B cell (primary cell): ENCODE measurements at regions of chr2 and their contacts with region 1.

Region 1: DNA sequence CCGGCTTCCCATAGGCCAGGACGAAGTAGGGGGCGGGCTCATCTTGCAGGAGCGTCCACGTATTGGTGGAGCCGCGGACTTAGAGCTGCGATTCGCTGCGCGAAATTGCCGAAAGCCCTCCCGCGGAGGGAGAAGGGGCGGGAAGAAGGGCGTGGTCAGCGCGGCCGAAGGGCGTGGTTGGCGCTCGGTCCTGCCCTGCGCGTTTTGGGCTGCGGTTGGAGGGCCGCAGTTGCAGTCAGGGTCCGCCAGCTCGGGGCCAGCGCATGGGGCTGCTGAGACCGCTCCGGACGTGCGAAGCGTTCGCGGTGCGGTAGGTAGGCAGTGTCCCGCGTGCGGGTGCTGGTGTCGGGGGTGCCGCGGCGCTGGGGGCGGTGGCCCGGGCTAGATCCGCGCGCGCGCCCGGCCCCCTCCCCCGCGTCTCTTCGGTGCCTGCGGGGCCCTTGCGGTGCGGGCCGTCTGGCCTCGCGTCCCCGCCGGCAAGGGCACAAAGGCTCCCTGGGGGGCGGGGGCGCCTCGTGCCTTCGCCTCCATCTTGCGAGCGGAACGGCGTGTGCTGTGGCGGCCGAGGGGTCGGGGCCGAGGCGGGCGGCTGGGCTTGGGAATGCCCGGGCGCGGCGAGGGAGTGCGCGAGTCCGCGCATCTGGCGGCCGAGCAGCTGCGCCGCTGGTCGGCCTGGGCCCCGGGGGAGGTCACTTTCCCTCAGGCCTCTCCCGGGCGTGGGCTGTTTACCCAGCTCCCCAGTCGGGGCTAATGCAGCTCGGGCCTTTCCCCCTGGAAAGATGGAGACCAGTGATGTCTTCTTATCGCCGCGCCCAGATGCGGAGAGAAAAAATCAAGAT is at the start of gene CEP68:
- DNase-seq: peak; percentile 98
- ATAC-seq: peak; percentile 92
- H3K4me3 ChIP-seq: peak within 1 kb of the TSS; percentile 76 to 81 (median 80)
- H3K4me3 Mint-ChIP-seq: peak within 1 kb of the TSS; percentile 100
- H3K27ac ChIP-seq: peak within 1 kb of the TSS; percentile 78 to 88
- H3K27ac Mint-ChIP-seq: peak within 1 kb of the TSS; percentile 99
- H3K4me1 ChIP-seq: peaks cover 47 to 48% of the 10 kb centered on the region in 2 donors
- H3K4me1 Mint-ChIP-seq: peaks cover 65% of the 10 kb centered on the region
- H3K27me3 ChIP-seq: no peaks in the 10 kb centered on the region
- H3K27me3 Mint-ChIP-seq: no peaks in the 10 kb centered on the region
- CTCF ChIP-seq: no peak
- total RNA-seq, gene CEP68: 31.8 and 32.0 TPM in 2 replicates

Region 2: DNA sequence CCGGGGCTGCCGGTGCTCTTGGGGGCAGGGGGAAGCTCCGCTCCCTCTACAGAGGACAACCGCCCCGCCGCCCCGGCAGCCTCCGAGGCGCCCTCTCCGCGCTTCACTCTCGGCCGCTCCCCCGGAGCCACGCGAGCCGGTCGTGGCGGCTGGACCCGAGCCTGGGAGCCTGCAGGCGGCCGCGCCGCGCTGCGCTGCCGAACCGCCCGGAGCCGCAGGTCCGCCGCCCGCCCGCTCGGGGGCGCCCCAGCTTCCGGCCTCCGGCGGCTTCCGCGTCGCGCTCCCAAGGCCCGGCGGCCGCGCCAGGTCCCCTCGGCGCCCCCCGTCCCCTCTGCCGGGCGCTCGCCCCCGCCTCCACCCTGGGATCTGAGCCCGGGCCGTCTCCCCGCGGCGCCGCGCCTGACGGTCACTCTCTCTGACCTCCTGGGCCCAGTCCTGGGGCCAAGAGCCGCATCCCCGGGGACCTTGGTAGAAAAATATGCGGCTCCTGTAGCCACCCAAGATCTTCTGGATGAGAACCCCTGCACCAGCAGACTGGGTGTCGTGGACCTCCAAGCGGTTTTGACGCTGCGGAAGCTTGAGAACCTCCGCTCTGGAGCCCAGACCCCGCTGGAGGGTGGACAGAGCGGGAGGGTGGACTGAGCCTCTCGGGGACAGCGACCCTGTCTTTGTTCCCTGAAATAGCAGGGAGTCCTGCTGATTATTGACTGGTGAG is 447.1 kb before region 1 on chr2:
- CTCF ChIA-PET with region 1: no interaction called
- POLR2A ChIA-PET with region 1: no interaction called
- intact Hi-C with region 1: loop called (anchors 1 kb)
- DNase-seq: peak; percentile 86
- ATAC-seq: peak; percentile 72
- H3K4me3 ChIP-seq: peak overlapping the region; percentile 51 to 77 (median 64)
- H3K4me3 Mint-ChIP-seq: peak overlapping the region; percentile 78
- H3K27ac ChIP-seq: peak overlapping the region; percentile 53 to 84
- H3K27ac Mint-ChIP-seq: peak overlapping the region; percentile 78
- H3K4me1 ChIP-seq: peaks cover 22 to 34% of the 10 kb centered on the region in 2 donors
- H3K4me1 Mint-ChIP-seq: peaks cover 29% of the 10 kb centered on the region
- H3K27me3 ChIP-seq: no peaks in the 10 kb centered on the region
- H3K27me3 Mint-ChIP-seq: no peaks in the 10 kb centered on the region
- CTCF ChIP-seq: peak; percentile 53

Region 3: DNA sequence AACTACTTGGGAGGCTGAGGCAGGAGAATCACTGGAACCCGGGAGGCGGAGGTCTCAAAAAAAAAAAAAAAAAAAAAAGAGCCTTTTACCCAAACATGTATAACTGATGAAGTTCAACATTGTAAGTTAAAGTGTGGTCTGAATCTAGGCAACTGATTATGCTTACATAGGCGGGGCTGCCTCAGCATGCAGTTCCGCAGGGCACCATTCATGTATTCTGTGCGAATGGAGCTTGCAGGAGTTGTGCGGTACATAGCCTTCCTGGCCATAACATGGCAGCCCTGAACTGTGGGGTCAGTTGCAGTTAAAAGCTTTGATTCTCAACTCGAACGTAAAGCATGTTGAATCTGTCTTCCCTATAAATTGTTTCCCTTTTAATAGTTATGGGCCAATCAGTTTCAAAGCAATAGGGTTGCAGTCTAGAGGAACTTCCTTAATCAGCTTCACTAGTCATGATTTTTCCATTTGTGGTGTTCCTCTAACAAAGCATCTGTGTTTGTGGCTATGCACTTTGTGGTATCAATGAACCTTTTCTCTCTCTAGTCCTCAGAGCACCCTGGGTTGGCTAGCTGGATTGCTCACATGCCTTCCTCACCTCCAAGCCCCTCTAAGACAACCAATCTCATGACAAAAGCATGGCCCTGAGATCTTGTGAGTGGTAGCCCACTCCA is 30.8 kb before region 1 on chr2:
- CTCF ChIA-PET with region 1: interaction called, 10 read pairs
- POLR2A ChIA-PET with region 1: interaction called, 14 read pairs
- intact Hi-C with region 1: loop called (anchors 2 kb)
- DNase-seq: peak; percentile 66
- ATAC-seq: peak; percentile 31
- H3K4me3 ChIP-seq: peak overlapping the region in 1 of 5 experiments; percentile 24
- H3K4me3 Mint-ChIP-seq: peak overlapping the region; percentile 72
- H3K27ac ChIP-seq: peak overlapping the region; percentile 75 to 86
- H3K27ac Mint-ChIP-seq: peak overlapping the region; percentile 90
- H3K4me1 ChIP-seq: peaks cover 55 to 69% of the 10 kb centered on the region in 2 donors
- H3K4me1 Mint-ChIP-seq: peaks cover 56% of the 10 kb centered on the region
- H3K27me3 ChIP-seq: no peaks in the 10 kb centered on the region
- H3K27me3 Mint-ChIP-seq: no peaks in the 10 kb centered on the region
- CTCF ChIP-seq: no peak

Region 4: DNA sequence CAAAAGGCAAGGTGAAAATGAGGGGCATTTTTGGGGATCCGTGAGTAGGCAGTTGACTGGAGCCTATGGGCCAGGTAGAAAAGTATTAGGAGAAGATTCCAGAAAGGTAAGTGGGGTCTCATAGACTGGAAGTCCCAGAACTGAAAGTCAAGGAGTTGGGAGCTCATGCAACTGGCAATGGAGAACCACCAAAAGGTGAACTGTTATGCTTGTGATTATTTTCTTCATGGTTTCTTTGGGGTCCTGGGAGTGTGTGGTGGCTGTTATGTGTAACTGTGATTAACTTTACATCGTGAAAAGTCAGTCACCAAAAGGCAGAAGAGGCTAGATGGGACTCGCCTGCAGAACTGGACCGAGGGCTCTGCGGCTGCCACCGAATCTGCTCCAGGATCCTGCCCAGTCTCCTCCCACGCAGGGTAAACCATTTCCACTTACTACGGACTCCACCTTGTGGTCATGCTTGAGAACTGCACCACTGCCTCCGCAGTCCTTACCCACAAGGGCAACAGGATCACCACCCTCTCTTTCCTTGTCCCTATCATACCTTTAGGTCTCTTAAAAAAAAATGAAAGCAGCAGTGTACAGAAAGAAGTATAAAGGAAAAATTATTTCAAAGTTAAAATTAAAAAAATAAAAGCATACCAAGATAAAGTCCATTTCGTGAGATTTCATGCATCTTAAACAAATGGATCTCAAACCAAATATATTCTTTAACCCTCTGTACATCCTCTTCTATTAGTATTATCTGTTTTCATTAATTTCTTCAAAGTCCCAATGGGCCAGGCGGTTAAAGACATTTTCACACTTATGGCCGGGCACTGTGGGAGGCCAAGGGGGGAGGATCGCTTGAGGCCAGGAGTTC is 15.8 kb before region 1 on chr2:
- CTCF ChIA-PET with region 1: interaction called, 4 read pairs
- POLR2A ChIA-PET with region 1: interaction called, 4 read pairs
- intact Hi-C with region 1: loop called (anchors 2 kb)
- DNase-seq: peak; percentile 86
- ATAC-seq: peak; percentile 99
- H3K4me3 ChIP-seq: no peak overlapping the region
- H3K4me3 Mint-ChIP-seq: no peak overlapping the region
- H3K27ac ChIP-seq: no peak overlapping the region
- H3K27ac Mint-ChIP-seq: peak overlapping the region; percentile 42
- H3K4me1 ChIP-seq: peaks cover 5% of the 10 kb centered on the region in 2 donors
- H3K4me1 Mint-ChIP-seq: peaks cover 18% of the 10 kb centered on the region
- H3K27me3 ChIP-seq: no peaks in the 10 kb centered on the region
- H3K27me3 Mint-ChIP-seq: no peaks in the 10 kb centered on the region
- CTCF ChIP-seq: peak; percentile 96

Region 5: GRCh38 chr2:65169760-65170136 is 113.3 kb after region 1 on chr2:
- CTCF ChIA-PET with region 1: interaction called, 96 read pairs
- POLR2A ChIA-PET with region 1: no interaction called
- intact Hi-C with region 1: no loop called
- DNase-seq: no peak
- ATAC-seq: no peak
- H3K4me3 ChIP-seq: no peak overlapping the region
- H3K4me3 Mint-ChIP-seq: no peak overlapping the region
- H3K27ac ChIP-seq: no peak overlapping the region
- H3K27ac Mint-ChIP-seq: no peak overlapping the region
- H3K4me1 ChIP-seq: peaks cover 8 to 10% of the 10 kb centered on the region in 2 donors
- H3K4me1 Mint-ChIP-seq: peaks cover 12% of the 10 kb centered on the region
- H3K27me3 ChIP-seq: no peaks in the 10 kb centered on the region
- H3K27me3 Mint-ChIP-seq: no peaks in the 10 kb centered on the region
- CTCF ChIP-seq: no peak